CD14-positive monocyte (primary cell): ENCODE measurements at regions of chr10 and their contacts with region 1.

Region 1: GRCh38 chr10:130127364-130128061 is 8.7 kb upstream of the GLRX3 start:
- DNase-seq: peak; percentile 18 to 43 (median 32)
- H3K4me3 ChIP-seq: no peak overlapping the region
- H3K4me3 Mint-ChIP-seq: peak overlapping the region in 1 of 2 donors; percentile 37
- H3K27ac ChIP-seq: no peak overlapping the region
- H3K27ac Mint-ChIP-seq: no peak overlapping the region
- H3K4me1 ChIP-seq: no peaks in the 10 kb centered on the region
- H3K4me1 Mint-ChIP-seq: no peaks in the 10 kb centered on the region
- H3K27me3 ChIP-seq: peaks cover 17 to 21% of the 10 kb centered on the region in 2 donors
- H3K27me3 Mint-ChIP-seq: peaks cover 36 to 62% (median 40%) of the 10 kb centered on the region in 3 donors
- CTCF ChIP-seq: peak; percentile 74

Region 2: GRCh38 chr10:129030996-129031843 is 1096.3 kb before region 1 on chr10:
- intact Hi-C with region 1: loop called in 1 of 2 experiments (anchors 5 kb)
- DNase-seq: peak in 1 of 3 donors; percentile 12
- H3K4me3 ChIP-seq: no peak overlapping the region
- H3K4me3 Mint-ChIP-seq: peak overlapping the region in 1 of 2 donors; percentile 7
- H3K27ac ChIP-seq: no peak overlapping the region
- H3K27ac Mint-ChIP-seq: no peak overlapping the region
- H3K4me1 ChIP-seq: no peaks in the 10 kb centered on the region
- H3K4me1 Mint-ChIP-seq: peaks cover 4% of the 10 kb centered on the region
- H3K27me3 ChIP-seq: peaks cover 29 to 48% of the 10 kb centered on the region in 2 donors
- H3K27me3 Mint-ChIP-seq: peaks cover 37 to 55% (median 40%) of the 10 kb centered on the region in 3 donors
- CTCF ChIP-seq: peak; percentile 41

Region 3: DNA sequence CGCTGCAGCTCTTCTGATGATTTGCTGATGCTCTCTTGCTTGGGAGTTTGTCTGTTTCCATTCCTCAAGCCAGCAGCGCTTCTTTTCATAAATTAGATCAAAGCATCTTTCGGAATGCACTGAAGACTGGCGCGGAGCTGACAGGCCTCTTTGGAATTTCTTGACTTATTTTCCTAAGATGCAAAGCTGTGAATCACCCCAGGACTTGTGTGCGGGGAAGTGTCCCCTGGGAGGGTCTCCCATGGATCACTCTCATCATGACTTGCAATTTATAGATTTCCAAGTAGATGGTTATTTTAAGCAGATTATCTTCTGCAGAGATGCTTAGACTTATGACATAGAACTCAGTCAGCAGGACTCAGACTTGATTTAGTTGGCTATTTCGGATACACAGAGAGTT is 716.8 kb after region 1 on chr10:
- intact Hi-C with region 1: no loop called
- DNase-seq: no peak
- H3K4me3 ChIP-seq: no peak overlapping the region
- H3K4me3 Mint-ChIP-seq: no peak overlapping the region
- H3K27ac ChIP-seq: no peak overlapping the region
- H3K27ac Mint-ChIP-seq: no peak overlapping the region
- H3K4me1 ChIP-seq: no peaks in the 10 kb centered on the region
- H3K4me1 Mint-ChIP-seq: no peaks in the 10 kb centered on the region
- H3K27me3 ChIP-seq: no peaks in the 10 kb centered on the region
- H3K27me3 Mint-ChIP-seq: peaks cover 0 to 6% (median 2%) of the 10 kb centered on the region in 3 donors
- CTCF ChIP-seq: no peak